ENCODE measurements at regions of chr2 and their contacts with region 1.

Region 1: GRCh38 chr2:113198790-113199612 is 25.2 kb downstream of the PSD4 start:
- DNase-seq: peak; percentile 95
- H3K4me3 ChIP-seq: peak overlapping the region; percentile 66 to 81
- H3K27ac ChIP-seq: no peak overlapping the region; a peak in 1 of 4 replicates
- H3K4me1 ChIP-seq: no peaks in the 10 kb centered on the region; a peak in 1 of 4 replicates
- H3K27me3 ChIP-seq: peaks cover 10% of the 10 kb centered on the region; the same call in 1 of the 2 replicates
- CTCF ChIP-seq: peak; percentile 83
- EP300 ChIP-seq: no peak
- RAD21 ChIP-seq: peak; percentile 36

Region 2: GRCh38 chr2:112674229-112674628 is 524.8 kb before region 1 on chr2:
- CTCF ChIA-PET with region 1: no interaction called
- POLR2A ChIA-PET with region 1: no interaction called
- DNase-seq: no peak
- H3K4me3 ChIP-seq: no peak overlapping the region
- H3K27ac ChIP-seq: no peak overlapping the region
- H3K4me1 ChIP-seq: no peaks in the 10 kb centered on the region
- H3K27me3 ChIP-seq: no peaks in the 10 kb centered on the region
- CTCF ChIP-seq: no peak
- EP300 ChIP-seq: no peak
- RAD21 ChIP-seq: no peak

Region 3: DNA sequence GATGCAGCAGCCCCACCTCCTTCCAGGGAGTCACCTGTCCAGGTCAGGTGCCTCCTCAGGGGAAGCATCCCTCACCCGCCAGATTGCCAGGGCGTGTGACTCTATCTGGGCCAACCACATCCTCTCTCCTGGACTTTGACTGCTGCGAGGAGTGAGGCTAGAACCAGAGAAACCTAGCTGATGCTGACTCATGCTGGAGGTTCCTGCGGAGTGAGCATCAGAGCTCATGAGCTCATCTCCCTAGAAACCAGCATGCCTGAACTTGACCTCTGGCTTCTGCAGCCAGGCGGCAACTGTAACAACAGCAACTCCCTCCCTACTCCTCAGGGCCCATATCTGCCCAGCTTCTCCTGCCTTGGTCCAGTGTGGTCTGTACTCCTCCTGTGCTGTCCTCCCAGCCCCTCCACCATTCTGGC is 506.5 kb before region 1 on chr2:
- CTCF ChIA-PET with region 1: no interaction called
- POLR2A ChIA-PET with region 1: no interaction called
- DNase-seq: no peak
- H3K4me3 ChIP-seq: no peak overlapping the region
- H3K27ac ChIP-seq: peak overlapping the region in 1 of 2 experiments; percentile 73; a peak in 2 of 4 replicates
- H3K4me1 ChIP-seq: peaks cover 5 to 21% of the 10 kb centered on the region in 2 experiments; a peak in 3 of 4 replicates
- H3K27me3 ChIP-seq: no peaks in the 10 kb centered on the region
- CTCF ChIP-seq: no peak
- EP300 ChIP-seq: no peak; a peak in 1 of 4 replicates
- RAD21 ChIP-seq: no peak

Region 4: DNA sequence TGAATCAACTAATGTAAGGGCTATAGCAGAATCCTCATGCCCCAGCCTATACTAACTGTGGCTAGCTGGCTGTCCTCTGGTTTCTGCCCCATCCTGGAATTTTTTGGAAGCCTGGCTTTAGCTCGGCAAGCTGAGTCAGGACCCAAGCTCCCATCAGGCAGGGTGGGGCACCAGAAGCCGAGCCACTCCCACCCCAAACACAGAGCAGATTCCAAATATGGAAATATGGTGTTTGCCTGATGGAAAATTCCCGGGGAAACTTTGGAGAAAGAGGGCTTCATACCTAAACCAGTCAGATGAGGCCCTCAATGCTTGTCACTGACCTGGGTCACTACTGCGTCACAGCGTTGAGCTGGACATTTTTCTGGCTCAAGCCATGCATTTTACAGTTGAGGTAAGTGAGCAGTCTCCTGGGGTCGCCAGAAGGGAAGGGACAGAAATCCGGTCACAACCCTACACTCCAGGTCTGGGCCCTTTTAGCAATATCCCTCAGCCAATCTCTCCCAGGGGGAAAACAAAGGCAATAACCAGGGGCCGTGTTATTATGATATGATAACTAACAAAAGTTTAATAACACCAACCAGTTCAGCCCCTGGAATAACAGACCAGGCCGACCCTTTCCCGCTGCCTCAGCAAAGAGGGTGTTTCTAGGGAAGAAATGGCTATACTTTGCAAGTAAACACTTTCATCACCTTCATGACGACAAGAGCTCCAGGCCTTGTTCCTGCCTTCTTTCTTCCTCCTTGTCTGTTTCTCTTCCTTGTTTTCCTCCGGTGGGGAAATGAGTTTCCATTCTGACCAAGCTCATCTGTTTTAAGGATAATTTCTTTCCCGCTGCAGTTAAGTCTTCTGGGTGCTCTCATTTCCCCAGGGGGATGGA is 12.5 kb after region 1 on chr2:
- CTCF ChIA-PET with region 1: interaction called, 39 read pairs
- POLR2A ChIA-PET with region 1: no interaction called
- DNase-seq: no peak
- H3K4me3 ChIP-seq: no peak overlapping the region
- H3K27ac ChIP-seq: no peak overlapping the region
- H3K4me1 ChIP-seq: peaks cover 0 to 11% of the 10 kb centered on the region in 2 experiments; a peak in 1 of 4 replicates
- H3K27me3 ChIP-seq: no peaks in the 10 kb centered on the region
- CTCF ChIP-seq: no peak
- EP300 ChIP-seq: no peak
- RAD21 ChIP-seq: no peak

Region 5: GRCh38 chr2:113240150-113240862 is 41.3 kb after region 1 on chr2:
- CTCF ChIA-PET with region 1: interaction called, 46 read pairs
- POLR2A ChIA-PET with region 1: interaction called, 3 read pairs
- DNase-seq: peak; percentile 89
- H3K4me3 ChIP-seq: peak overlapping the region in 1 of 2 experiments; percentile 11; a peak in 1 of 4 replicates
- H3K27ac ChIP-seq: peak overlapping the region; percentile 22 to 84
- H3K4me1 ChIP-seq: peaks cover 21 to 22% of the 10 kb centered on the region in 2 experiments
- H3K27me3 ChIP-seq: no peaks in the 10 kb centered on the region
- CTCF ChIP-seq: 0 out of 2 replicates have a peak, but pooled peaks have one; percentile 8
- EP300 ChIP-seq: peak; percentile 44 to 54; a peak in 2 of 4 replicates
- RAD21 ChIP-seq: no peak

Region 6: GRCh38 chr2:113361051-113361450 is 162.1 kb after region 1 on chr2:
- CTCF ChIA-PET with region 1: interaction called, 15 read pairs
- POLR2A ChIA-PET with region 1: no interaction called
- DNase-seq: no peak
- H3K4me3 ChIP-seq: no peak overlapping the region
- H3K27ac ChIP-seq: no peak overlapping the region
- H3K4me1 ChIP-seq: no peaks in the 10 kb centered on the region
- H3K27me3 ChIP-seq: no peaks in the 10 kb centered on the region; the same call in 1 of the 2 replicates
- CTCF ChIP-seq: no peak
- EP300 ChIP-seq: no peak
- RAD21 ChIP-seq: no peak

Measured in SK-N-SH (cell line).